Activated CD8-positive, alpha-beta T cell treated with anti-CD3 and anti-CD28 coated beads, Interleukin-2, amount 10 ng/mL, durations not matched to agents 7 days and 5 days (primary cell): ENCODE measurements at regions of chr11 and their contacts with region 1.

Region 1: DNA sequence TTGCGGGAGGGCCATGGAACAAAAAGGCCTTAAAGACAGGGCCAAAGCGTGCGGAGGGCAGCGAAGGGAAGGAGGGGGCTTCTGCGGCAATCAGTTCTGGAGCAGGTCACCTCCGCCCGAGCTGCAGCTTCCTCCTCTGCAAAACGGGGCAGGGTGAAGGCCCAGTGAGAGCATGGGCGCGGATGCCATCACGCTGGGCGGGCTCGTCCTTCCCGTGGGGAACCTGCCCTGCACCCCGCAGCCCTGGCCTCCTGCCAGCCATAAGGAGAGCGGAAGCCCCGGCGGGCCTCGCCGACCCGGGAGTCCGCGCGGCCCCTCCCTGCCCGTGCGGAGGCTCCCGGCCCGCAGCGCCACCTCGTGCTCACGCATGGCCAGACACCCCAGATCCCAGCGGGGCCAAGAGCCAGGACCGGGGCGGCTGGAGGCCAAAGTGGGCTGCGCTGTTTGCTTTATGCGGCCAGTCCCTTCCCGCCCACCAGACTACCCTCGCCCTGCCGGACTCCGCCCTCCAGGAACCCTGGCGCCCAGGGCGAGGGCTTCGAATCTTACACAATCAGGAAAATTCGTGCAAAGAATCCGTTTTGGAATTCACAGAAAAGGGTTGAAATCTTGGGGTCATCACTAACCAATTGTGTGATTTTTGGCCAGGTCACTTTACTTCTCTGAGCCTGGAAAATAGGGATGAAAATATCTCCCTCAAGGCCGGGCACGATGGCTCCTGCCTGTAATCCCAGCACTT is 16.1 kb downstream of the TSKU start:
- DNase-seq: peak; percentile 84
- ATAC-seq: peak; percentile 90
- H3K4me3 Mint-ChIP-seq: no peak overlapping the region
- H3K27ac Mint-ChIP-seq: no peak overlapping the region
- H3K4me1 Mint-ChIP-seq: peaks cover 26% of the 10 kb centered on the region
- H3K27me3 Mint-ChIP-seq: peaks cover 10% of the 10 kb centered on the region

Region 2: DNA sequence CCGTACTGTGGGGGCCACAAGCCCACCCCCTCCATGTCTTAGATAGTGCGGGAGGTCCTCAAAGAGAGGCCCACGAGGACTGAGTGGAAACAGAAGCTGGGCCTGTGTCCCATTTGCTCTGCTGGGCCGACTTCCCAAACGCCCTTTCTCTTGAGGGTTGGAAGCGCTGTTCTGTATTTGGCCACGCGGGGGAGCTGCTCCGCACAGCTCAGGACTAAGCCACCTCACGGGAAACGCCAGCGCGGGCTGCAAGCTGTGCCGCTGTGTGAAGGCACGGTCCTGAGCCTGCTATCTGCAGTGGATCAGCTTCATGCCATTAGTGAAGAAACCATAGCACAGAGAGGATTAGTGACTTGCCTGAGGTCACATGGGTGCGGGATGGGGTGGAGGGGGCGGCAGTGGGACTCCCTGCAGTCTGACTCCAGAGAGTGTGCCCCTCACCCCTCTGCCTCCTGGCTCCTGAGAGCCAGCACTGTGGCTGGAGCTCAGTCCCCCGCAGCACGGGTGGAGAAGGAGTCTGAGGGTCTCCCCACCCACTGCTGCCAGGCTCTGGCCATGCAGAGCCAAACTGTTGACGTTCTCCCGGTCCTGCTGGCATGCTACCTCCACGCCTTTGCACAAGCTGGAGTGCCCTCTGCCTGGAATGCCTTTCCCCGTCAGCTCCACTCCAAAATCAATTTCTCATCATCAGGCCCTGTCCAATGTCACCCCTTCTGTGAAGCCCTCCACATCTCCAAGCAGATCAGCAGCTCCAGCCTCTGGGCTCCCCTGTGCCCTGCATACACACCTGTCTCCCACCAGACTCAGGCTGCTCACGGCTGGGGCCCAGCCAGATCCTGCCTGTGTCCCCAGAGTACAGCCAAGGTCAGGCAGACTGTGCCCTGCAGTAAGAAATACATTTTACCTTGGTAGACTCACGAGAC is 77.2 kb before region 1 on chr11:
- CTCF ChIA-PET with region 1: interaction called, 91 read pairs
- POLR2A ChIA-PET with region 1: no interaction called
- DNase-seq: peak; percentile 84
- ATAC-seq: peak; percentile 97
- H3K4me3 Mint-ChIP-seq: no peak overlapping the region
- H3K27ac Mint-ChIP-seq: no peak overlapping the region
- H3K4me1 Mint-ChIP-seq: peaks cover 6% of the 10 kb centered on the region
- H3K27me3 Mint-ChIP-seq: peaks cover 13% of the 10 kb centered on the region

Region 3: DNA sequence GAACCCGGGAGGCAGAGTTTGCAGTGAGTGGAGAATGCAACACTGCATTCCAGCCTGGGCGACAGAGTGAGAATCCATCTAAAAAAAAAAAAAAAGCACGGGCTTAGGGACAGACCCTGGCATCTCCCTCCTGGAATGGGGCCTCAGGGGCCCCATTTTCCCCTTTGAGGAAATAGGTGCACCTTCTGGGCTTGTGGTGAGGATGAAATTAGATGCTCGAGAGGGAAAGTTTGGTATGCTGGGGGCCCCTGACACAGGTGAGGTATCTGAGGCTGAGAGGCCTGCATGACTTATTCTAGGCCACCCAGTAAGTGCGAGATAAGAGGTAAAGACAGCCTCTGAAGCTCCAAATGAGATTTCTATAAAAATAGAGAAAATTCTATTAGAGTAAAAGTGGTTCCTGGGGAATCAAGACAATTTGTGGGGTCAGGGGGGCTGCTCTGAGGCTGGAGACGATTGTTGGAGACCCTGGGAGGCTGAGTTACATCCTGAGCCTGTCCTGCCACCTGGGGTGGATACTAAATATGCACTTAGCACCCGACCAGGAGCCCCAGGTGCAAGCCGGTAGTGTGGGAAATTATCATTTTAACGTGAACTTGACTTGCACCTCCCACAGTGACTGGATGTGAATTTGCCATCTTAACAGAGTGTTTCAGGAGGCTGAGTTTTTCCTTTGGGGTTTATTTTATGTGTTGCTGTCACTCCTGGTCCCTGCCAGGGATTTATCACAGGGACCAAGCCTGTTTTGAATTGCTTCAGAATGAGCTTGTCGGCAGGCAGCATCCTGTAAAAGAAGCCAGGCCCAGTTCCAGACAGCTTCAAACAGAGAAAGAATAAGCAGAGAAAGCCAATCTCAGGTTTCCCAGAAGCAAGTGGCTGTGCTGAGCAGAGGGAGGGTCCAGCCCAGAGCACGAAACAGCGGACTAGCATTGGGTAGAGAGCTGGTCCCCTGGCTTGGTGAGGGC is 64.5 kb before region 1 on chr11:
- CTCF ChIA-PET with region 1: interaction called, 89 read pairs
- POLR2A ChIA-PET with region 1: no interaction called
- DNase-seq: no peak
- ATAC-seq: no peak
- H3K4me3 Mint-ChIP-seq: no peak overlapping the region
- H3K27ac Mint-ChIP-seq: no peak overlapping the region
- H3K4me1 Mint-ChIP-seq: peaks cover 6% of the 10 kb centered on the region
- H3K27me3 Mint-ChIP-seq: peaks cover 6% of the 10 kb centered on the region

Region 4: GRCh38 chr11:76782526-76783293 is 16.5 kb before region 1 on chr11:
- CTCF ChIA-PET with region 1: interaction called, 13 read pairs
- POLR2A ChIA-PET with region 1: no interaction called
- DNase-seq: peak; percentile 83
- ATAC-seq: peak; percentile 81
- H3K4me3 Mint-ChIP-seq: peak overlapping the region; percentile 94
- H3K27ac Mint-ChIP-seq: peak overlapping the region; percentile 93
- H3K4me1 Mint-ChIP-seq: peaks cover 24% of the 10 kb centered on the region
- H3K27me3 Mint-ChIP-seq: peaks cover 54% of the 10 kb centered on the region

Region 5: DNA sequence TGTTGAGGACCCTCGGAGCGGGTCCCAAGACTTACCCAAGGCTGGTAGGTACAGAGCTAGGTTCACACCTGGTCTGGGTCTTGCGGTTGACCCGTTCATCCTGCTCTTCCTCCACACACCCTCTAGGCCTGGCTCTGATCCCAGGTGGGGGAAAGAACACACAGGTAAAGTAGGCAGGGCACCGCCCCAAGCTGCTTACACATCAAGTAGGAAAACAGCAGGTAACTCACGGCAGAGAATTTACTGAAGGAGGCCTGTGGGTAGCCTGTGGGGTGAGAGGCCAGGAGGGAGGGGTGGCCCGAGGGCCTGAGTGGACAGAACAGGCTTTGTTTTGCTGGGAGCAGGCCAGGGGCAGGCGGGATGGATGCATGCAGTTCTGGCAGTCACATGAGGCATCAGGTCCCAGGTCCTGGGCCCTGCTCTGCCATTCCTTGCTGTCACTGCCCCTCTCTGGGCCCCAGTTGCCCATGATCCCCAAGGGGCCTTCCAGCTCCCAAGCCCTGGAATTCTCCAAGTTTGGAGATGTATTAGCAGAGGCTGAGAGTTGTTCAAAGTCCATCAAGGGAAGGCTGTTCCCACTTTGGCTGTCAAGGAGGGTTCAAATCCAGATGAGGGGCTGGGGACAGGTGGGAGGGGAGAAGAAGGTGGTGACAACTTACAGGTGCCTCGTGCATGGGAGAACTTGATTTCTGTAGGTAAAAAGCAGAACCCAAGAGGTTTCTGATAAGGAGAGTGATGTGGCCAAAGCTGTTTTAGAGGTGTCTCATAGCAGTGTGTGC is 10.4 kb before region 1 on chr11:
- CTCF ChIA-PET with region 1: interaction called, 13 read pairs
- POLR2A ChIA-PET with region 1: no interaction called
- DNase-seq: no peak
- ATAC-seq: no peak
- H3K4me3 Mint-ChIP-seq: no peak overlapping the region
- H3K27ac Mint-ChIP-seq: no peak overlapping the region
- H3K4me1 Mint-ChIP-seq: no peaks in the 10 kb centered on the region
- H3K27me3 Mint-ChIP-seq: peaks cover 33% of the 10 kb centered on the region

Region 6: GRCh38 chr11:76872959-76873827 is 74.0 kb after region 1 on chr11:
- CTCF ChIA-PET with region 1: no interaction called
- POLR2A ChIA-PET with region 1: no interaction called
- DNase-seq: no peak
- ATAC-seq: no peak
- H3K4me3 Mint-ChIP-seq: no peak overlapping the region
- H3K27ac Mint-ChIP-seq: no peak overlapping the region
- H3K4me1 Mint-ChIP-seq: no peaks in the 10 kb centered on the region
- H3K27me3 Mint-ChIP-seq: peaks cover 2% of the 10 kb centered on the region